ENCODE measurements at regions of chr9 and their contacts with region 1.

Region 1: DNA sequence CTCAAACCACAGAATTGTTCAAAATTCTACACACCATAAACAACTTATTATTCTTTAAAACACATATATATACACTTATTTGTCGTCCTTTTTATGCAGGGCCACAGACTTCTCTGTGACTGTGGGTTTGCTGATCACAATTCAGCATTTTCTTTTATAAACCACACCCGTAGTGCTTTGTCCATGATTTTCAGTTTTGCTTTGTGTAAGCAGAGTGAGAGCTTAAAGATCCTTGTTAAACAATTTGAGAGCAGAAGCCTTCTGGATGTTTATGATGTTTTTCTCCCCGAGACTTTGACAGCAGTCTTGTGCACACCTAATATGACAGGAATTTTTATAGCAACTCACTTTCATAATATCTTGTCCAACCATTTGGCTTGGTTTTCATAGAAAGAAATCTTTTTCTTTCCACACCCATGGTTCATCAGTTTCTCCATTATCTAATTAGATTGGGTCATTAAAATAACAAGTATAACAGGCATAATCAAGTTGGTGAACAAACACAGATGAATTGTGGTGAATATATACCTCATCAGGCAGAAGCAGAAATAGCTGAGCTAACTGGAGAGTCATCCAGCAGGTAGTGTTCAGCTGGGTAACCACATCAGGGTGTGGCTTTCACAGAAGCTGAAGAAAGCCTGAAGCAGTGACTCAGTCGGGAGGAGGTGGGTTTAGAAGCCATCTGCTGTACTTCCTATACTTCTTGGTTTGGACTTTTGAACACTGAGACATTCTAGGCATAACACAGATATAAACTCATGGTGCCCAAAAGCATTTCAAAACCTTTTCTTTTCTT is 232.8 kb downstream of the DOCK8 start:
- DNase-seq: peak; percentile 61 to 87 (median 71)
- H3K4me3 ChIP-seq: no peak overlapping the region
- H3K4me3 Mint-ChIP-seq: peak overlapping the region; percentile 1 to 44 (median 20)
- H3K27ac ChIP-seq: peak overlapping the region; percentile 3
- H3K27ac Mint-ChIP-seq: peak overlapping the region; percentile 67 to 90 (median 84)
- H3K4me1 ChIP-seq: peaks cover 22% of the 10 kb centered on the region
- H3K4me1 Mint-ChIP-seq: peaks cover 18 to 34% (median 27%) of the 10 kb centered on the region in 4 donors
- H3K27me3 ChIP-seq: no peaks in the 10 kb centered on the region
- H3K27me3 Mint-ChIP-seq: no peaks in the 10 kb centered on the region

Region 2: DNA sequence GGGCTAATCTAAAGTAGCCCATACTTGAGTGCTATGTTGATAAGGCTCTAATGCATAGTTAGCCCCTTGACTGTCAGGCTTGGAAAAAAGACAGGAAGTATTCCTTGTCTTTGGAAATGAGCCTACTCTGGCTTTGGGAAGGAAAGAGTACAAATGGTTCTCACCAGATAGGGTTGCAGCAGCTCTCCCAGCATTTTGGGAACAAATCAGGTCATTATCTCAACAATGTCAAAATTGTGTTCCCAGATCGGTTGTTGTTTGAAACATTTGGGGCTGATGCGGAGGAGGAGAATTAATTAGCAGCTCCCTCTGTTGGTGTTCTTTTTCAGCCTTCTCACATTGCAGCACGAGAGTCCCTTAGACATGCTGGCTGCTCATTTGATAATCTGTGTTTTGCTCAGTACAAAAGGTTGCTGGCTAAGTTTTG is 99.4 kb after region 1 on chr9:
- CTCF ChIA-PET with region 1: interaction called, 4 read pairs
- POLR2A ChIA-PET with region 1: no interaction called
- intact Hi-C with region 1: loop called (anchors 1 kb)
- DNase-seq: peak in 1 of 5 donors; percentile 14
- H3K4me3 ChIP-seq: no peak overlapping the region
- H3K4me3 Mint-ChIP-seq: no peak overlapping the region
- H3K27ac ChIP-seq: no peak overlapping the region
- H3K27ac Mint-ChIP-seq: no peak overlapping the region
- H3K4me1 ChIP-seq: no peaks in the 10 kb centered on the region
- H3K4me1 Mint-ChIP-seq: peaks cover 2 to 15% (median 9%) of the 10 kb centered on the region in 4 donors
- H3K27me3 ChIP-seq: no peaks in the 10 kb centered on the region
- H3K27me3 Mint-ChIP-seq: peaks cover 0 to 7% of the 10 kb centered on the region in 2 donors

Region 3: DNA sequence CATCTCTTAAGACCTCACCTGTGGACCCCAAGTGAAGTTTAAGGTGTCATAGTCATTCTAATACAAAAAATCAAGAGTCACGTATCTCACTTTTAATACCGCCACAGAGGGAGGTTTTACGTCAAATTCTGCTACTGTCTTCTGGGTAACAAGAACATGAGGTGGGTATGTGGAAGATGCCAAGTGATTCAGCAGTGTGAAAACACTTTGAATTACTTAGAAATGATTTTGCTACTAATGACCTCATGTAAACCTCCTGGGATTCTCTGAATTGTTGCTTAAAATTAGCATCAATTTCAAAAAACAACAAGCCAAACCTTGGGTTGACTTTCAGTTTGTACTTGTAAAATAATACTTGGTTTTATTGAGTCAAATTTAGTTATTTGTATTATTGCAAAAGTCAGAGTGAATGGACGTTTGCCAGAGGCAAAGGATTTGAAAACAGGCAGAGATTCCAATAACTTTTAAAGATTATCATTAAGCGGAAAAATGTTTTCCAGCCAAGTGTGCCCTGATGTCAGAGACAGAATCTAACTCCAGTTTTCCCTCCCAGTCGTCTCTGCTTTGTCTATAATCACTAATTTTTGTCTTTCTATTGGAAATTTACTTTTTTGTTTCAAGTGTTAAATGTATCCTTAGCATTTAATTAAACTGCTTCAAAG is 611.5 kb after region 1 on chr9:
- CTCF ChIA-PET with region 1: no interaction called
- POLR2A ChIA-PET with region 1: no interaction called
- intact Hi-C with region 1: no loop called
- DNase-seq: no peak
- H3K4me3 ChIP-seq: no peak overlapping the region
- H3K4me3 Mint-ChIP-seq: no peak overlapping the region
- H3K27ac ChIP-seq: no peak overlapping the region
- H3K27ac Mint-ChIP-seq: no peak overlapping the region
- H3K4me1 ChIP-seq: no peaks in the 10 kb centered on the region
- H3K4me1 Mint-ChIP-seq: peaks cover 0 to 2% (median 0%) of the 10 kb centered on the region in 4 donors
- H3K27me3 ChIP-seq: no peaks in the 10 kb centered on the region
- H3K27me3 Mint-ChIP-seq: peaks cover 20 to 32% of the 10 kb centered on the region in 2 donors